ENCODE measurements at regions of chr3 and their contacts with region 1.

Region 1: GRCh38 chr3:130093741-130094391 is 12.2 kb downstream of the ALG1L2 start:
- DNase-seq: peak; percentile 66
- ATAC-seq: no peak
- H3K4me3 Mint-ChIP-seq: peak overlapping the region; percentile 44
- H3K27ac Mint-ChIP-seq: peak overlapping the region; percentile 34
- H3K4me1 Mint-ChIP-seq: peaks cover 23% of the 10 kb centered on the region
- H3K27me3 Mint-ChIP-seq: peaks cover 2% of the 10 kb centered on the region
- CTCF ChIP-seq: no peak

Region 2: GRCh38 chr3:129942296-129942695 is 151.6 kb before region 1 on chr3:
- CTCF ChIA-PET with region 1: interaction called, 14 read pairs
- POLR2A ChIA-PET with region 1: no interaction called
- intact Hi-C with region 1: loop called (anchors 10 kb)
- DNase-seq: peak; percentile 66
- ATAC-seq: peak; percentile 92
- H3K4me3 Mint-ChIP-seq: no peak overlapping the region
- H3K27ac Mint-ChIP-seq: no peak overlapping the region
- H3K4me1 Mint-ChIP-seq: no peaks in the 10 kb centered on the region
- H3K27me3 Mint-ChIP-seq: peaks cover 3% of the 10 kb centered on the region
- CTCF ChIP-seq: peak; percentile 64

Region 3: DNA sequence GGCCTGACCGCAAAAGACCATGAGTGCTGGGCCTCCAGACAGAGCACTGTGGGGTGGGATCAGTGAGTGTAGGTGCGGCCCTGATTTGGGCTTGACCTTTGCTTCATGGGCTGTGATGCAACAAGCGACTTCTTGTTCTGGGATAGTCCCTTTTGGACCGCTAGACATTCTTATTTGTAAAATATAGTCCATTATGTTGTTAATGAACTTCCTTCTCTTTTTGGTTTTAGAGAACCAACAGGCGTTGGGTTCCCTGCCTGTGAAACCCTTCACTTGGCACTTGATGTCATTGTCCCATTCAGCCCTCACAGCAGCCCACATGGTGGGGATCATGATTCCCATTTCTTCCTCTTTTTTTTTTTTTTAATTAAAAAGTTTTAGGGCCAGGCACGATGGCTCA is 135.1 kb before region 1 on chr3:
- CTCF ChIA-PET with region 1: no interaction called
- POLR2A ChIA-PET with region 1: no interaction called
- intact Hi-C with region 1: no loop called
- DNase-seq: no peak
- ATAC-seq: no peak
- H3K4me3 Mint-ChIP-seq: no peak overlapping the region
- H3K27ac Mint-ChIP-seq: no peak overlapping the region
- H3K4me1 Mint-ChIP-seq: no peaks in the 10 kb centered on the region
- H3K27me3 Mint-ChIP-seq: peaks cover 2% of the 10 kb centered on the region
- CTCF ChIP-seq: no peak

Region 4: DNA sequence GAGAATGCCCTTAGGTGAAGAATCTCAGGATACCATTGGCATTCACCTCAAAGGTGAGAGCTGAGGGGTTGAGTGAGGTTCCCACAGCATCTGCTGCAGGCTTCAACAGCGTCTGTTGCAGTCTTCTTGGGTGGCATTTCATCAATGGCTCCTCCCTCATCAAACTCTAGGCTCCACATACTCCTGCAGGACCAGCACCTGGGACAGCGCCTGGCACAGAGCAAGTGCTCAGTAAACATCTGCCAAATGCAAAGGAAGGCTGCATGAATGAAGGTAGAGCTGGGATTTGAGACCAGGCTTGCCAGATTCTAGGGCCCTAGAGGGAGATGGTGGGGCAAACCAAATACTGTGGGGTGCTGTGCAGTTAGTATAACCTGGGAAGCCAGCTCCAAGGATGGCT is 109.7 kb before region 1 on chr3:
- CTCF ChIA-PET with region 1: no interaction called
- POLR2A ChIA-PET with region 1: no interaction called
- intact Hi-C with region 1: no loop called
- DNase-seq: no peak
- ATAC-seq: no peak
- H3K4me3 Mint-ChIP-seq: no peak overlapping the region
- H3K27ac Mint-ChIP-seq: no peak overlapping the region
- H3K4me1 Mint-ChIP-seq: no peaks in the 10 kb centered on the region
- H3K27me3 Mint-ChIP-seq: peaks cover 2% of the 10 kb centered on the region
- CTCF ChIP-seq: no peak

Region 5: GRCh38 chr3:130010556-130010955 is 83.3 kb before region 1 on chr3:
- CTCF ChIA-PET with region 1: no interaction called
- POLR2A ChIA-PET with region 1: no interaction called
- intact Hi-C with region 1: no loop called
- DNase-seq: no peak
- ATAC-seq: no peak
- H3K4me3 Mint-ChIP-seq: no peak overlapping the region
- H3K27ac Mint-ChIP-seq: no peak overlapping the region
- H3K4me1 Mint-ChIP-seq: no peaks in the 10 kb centered on the region
- H3K27me3 Mint-ChIP-seq: peaks cover 9% of the 10 kb centered on the region
- CTCF ChIP-seq: no peak

Region 6: DNA sequence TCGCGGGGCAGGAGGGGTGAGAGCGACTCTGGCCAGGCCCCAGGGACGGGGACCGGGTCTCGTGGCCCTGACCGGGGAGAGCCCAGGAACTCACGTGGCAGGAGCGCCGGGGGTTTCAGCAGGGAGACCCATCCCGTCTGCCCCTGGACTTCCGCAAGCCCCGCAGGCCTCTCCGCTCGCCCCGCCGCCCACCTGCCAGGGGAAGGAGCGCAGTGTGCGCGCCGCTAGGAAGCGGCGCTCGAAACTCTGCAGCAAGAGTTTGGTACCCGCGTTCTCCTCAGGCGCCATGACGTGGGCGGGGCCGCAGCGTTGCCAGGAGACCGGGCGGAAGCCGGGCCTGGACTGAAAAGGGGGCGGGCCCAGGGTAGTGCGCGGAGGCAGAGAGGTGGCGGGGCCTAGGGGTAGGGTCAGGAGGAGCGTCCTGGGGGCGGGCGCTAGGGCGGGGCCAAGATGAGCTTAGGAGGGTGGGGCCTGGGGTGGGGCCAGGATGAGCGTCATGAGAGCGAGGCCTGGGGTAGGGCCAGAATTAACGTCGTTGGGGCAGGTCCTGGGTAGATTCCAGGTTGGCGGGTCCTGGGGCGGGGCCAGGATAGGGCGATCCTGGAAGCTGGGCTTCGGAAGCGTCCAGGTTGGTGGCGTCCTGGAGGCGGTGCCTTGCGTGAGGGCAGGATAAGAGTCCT is 17.5 kb after region 1 on chr3:
- CTCF ChIA-PET with region 1: interaction called, 10 read pairs
- POLR2A ChIA-PET with region 1: interaction called, 3 read pairs
- intact Hi-C with region 1: no loop called
- DNase-seq: peak; percentile 99
- ATAC-seq: peak; percentile 100
- H3K4me3 Mint-ChIP-seq: peak overlapping the region; percentile 92
- H3K27ac Mint-ChIP-seq: peak overlapping the region; percentile 99
- H3K4me1 Mint-ChIP-seq: peaks cover 26% of the 10 kb centered on the region
- H3K27me3 Mint-ChIP-seq: no peaks in the 10 kb centered on the region
- CTCF ChIP-seq: no peak

Measured in activated CD8-positive, alpha-beta T cell treated with anti-CD3 and anti-CD28 coated beads for 36 hours (primary cell).